ENCODE measurements at regions of chr9 and their contacts with region 1.

Region 1: GRCh38 chr9:100229561-100229960 is 123.2 kb downstream of the TEX10 start:
- DNase-seq: no peak
- ATAC-seq: no peak

Region 2: GRCh38 chr9:98838155-98838867 is 1391.2 kb before region 1 on chr9:
- intact Hi-C with region 1: loop called in 1 of 2 experiments (anchors 5 kb)
- DNase-seq: no peak
- ATAC-seq: no peak

Region 3: DNA sequence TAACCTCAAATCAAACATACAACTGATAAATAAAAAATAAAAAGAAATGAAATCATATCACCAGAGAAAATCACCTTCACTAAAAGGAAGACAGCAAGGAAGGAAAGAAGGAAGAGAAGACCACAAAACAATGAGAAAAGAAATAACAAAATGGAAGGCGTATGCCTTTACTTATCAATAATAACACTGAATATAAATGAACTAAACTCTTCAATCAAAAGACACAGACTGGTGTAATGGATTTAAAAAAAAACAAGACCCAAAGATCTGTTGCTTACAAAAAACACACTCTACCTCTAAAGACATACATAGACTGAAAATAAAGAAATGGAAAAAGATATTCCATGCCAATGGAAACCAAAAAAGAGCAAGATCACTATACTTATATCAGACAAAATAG is 191.1 kb before region 1 on chr9:
- intact Hi-C with region 1: no loop called
- DNase-seq: no peak
- ATAC-seq: no peak

Region 4: GRCh38 chr9:100126423-100126822 is 103.1 kb before region 1 on chr9:
- intact Hi-C with region 1: no loop called
- DNase-seq: no peak
- ATAC-seq: no peak

Region 5: DNA sequence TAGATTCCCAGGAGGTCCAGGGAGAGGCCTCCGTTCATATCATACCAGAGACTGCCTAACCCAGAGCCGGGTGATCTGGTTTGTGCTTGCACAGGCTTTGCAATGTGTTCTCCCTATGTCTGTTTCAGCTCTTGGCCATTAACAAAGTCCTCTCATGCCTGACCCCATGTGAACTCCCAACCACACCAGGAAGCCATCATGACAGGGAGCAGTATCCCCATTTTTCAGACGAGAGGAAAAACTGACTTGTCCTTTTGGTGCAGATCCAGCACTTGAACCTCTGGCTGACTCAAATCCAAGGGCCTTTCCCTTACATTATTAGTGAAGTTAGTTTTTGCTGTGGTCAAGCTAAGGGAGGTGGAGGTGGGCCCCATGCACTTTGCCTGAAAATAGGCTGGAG is 64.8 kb after region 1 on chr9:
- intact Hi-C with region 1: loop called in 1 of 2 experiments (anchors 10 kb)
- DNase-seq: no peak
- ATAC-seq: no peak

Measured in left colon (tissue), 2 donors.